WTC11 (cell line): ENCODE measurements at regions of chr13 and their contacts with region 1.

Region 1: GRCh38 chr13:51832471-51833152 is 12.4 kb downstream of the TMEM272 start:
- DNase-seq: no peak
- ATAC-seq: peak; percentile 90
- H3K4me3 Mint-ChIP-seq: no peak overlapping the region
- H3K27ac Mint-ChIP-seq: no peak overlapping the region
- H3K4me1 Mint-ChIP-seq: peaks cover 5% of the 10 kb centered on the region
- H3K27me3 Mint-ChIP-seq: no peaks in the 10 kb centered on the region; the same call in 1 of the 2 replicates
- CTCF ChIP-seq: no peak

Region 2: DNA sequence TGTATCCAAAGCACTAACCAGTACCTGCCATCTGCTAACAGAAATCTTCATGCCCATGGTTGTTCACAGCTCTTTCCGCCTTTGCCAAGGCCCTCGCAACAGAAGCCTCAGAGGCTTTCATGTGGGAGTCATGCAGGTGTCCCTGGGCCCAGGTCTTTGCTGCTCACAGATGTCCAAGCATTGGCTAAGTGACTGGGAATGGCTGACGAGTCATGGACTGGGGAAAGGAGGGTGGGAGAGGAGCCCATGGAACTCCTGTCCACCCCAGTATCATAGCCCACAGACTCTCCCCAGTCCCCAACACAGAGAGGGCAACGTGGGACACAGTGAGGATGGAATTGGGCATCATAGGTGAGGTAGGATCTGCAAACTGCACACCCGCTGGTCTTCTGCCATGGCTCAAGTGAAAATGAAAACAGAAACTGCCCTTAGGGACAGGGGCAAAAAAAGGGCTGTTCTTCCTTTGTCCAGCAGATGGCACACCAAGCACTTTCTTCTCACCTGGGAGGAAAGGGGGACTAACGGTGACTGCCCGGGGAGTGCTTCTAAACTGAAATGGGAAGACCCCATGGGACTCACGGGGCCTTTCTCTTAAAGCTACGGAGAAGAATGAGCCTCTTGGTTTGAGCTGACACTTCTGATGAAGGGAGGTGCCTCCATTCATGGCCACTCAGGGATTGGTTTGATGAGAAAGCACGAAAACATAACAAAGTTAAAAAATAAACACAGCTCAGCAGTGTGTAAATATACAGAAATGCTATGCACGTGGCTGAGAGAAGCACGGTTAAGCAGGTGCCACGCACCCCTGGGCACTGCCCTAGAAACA is 17.6 kb before region 1 on chr13:
- CTCF ChIA-PET with region 1: interaction called, 33 read pairs
- POLR2A ChIA-PET with region 1: no interaction called
- DNase-seq: peak; percentile 80
- ATAC-seq: peak; percentile 77
- H3K4me3 Mint-ChIP-seq: no peak overlapping the region; the same call in 1 of the 2 replicates
- H3K27ac Mint-ChIP-seq: peak overlapping the region; percentile 57; the same call in 1 of the 2 replicates
- H3K4me1 Mint-ChIP-seq: peaks cover 37% of the 10 kb centered on the region
- H3K27me3 Mint-ChIP-seq: peaks cover under 1% of the 10 kb centered on the region; the same call in 1 of the 2 replicates
- CTCF ChIP-seq: peak; percentile 74

Region 3: GRCh38 chr13:51865838-51866237 is 33.2 kb after region 1 on chr13:
- CTCF ChIA-PET with region 1: no interaction called
- POLR2A ChIA-PET with region 1: no interaction called
- DNase-seq: peak; percentile 56
- ATAC-seq: peak; percentile 84
- H3K4me3 Mint-ChIP-seq: no peak overlapping the region
- H3K27ac Mint-ChIP-seq: no peak overlapping the region
- H3K4me1 Mint-ChIP-seq: no peaks in the 10 kb centered on the region
- H3K27me3 Mint-ChIP-seq: peaks cover 2% of the 10 kb centered on the region
- CTCF ChIP-seq: no peak